Activated CD8-positive, alpha-beta memory T cell treated with anti-CD3 and anti-CD28 coated beads, Interleukin-2, amount 10 ng/mL, durations not matched to agents 7 days and 5 days (primary cell): ENCODE measurements at regions of chr5 and their contacts with region 1.

Region 1: DNA sequence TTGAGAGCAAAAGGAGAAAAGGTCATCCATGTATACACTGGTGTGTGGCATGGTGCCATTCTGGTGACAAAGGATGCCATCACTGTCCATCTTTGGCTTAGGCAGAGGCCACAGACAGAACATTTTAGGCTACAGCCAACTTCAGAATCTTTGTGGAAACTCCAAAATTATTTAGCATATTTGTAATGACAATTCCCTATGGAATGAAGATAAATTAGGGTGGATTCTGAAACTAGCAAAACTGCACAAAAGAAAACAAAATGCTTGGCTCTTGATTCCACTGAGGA is 92.5 kb downstream of the FBXW11 start:
- DNase-seq: no peak
- ATAC-seq: no peak
- H3K4me3 Mint-ChIP-seq: no peak overlapping the region
- H3K27ac Mint-ChIP-seq: no peak overlapping the region
- H3K4me1 Mint-ChIP-seq: peaks cover 35% of the 10 kb centered on the region
- H3K27me3 Mint-ChIP-seq: no peaks in the 10 kb centered on the region

Region 2: DNA sequence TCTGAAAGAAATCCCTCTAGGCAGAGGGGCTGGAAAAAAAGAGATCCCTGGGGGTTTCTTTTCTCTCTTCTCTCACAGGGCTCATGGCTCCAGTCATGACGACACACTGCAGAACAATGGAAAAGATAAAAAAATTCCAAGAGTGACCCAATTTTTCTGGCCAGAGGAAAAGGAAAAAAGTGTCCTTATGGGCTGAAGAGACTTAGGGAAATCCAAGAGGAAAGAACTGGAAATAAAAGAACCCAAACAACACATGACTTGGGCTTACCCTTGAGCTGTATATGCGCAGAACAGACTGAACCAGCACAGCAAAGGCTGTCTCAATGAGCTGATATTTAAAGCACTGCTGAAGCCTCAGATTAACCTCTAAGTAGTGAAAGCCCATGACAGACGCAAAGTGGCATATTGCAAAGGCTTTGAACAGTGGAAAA is 25.9 kb before region 1 on chr5:
- CTCF ChIA-PET with region 1: no interaction called
- DNase-seq: no peak
- ATAC-seq: no peak
- H3K4me3 Mint-ChIP-seq: no peak overlapping the region
- H3K27ac Mint-ChIP-seq: no peak overlapping the region
- H3K4me1 Mint-ChIP-seq: no peaks in the 10 kb centered on the region
- H3K27me3 Mint-ChIP-seq: no peaks in the 10 kb centered on the region

Region 3: GRCh38 chr5:172042181-172042580 is 128.3 kb after region 1 on chr5:
- CTCF ChIA-PET with region 1: interaction called, 21 read pairs
- DNase-seq: no peak
- ATAC-seq: no peak
- H3K4me3 Mint-ChIP-seq: no peak overlapping the region
- H3K27ac Mint-ChIP-seq: no peak overlapping the region
- H3K4me1 Mint-ChIP-seq: peaks cover 2% of the 10 kb centered on the region
- H3K27me3 Mint-ChIP-seq: no peaks in the 10 kb centered on the region

Region 4: DNA sequence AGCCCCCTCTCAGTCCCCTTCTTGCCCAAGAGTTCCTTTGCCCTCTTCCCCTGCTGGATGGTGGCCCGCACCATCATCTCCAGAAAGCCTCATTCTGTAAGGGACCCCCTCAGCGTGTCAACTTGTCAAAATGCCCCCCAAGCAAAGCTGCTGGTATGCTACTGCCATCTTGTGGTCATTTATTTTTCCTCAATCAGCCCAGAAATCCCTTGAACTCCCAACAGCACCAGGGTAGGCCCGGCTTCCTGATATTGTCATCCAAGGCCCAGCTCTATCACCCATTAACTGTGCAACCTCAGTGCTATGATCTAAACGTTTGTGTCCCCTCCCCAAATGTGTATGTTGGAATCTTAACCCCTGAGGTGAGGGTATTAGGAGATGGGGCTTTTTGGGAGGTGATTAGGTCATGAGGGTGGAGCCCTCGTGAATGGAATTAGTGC is 145.8 kb after region 1 on chr5:
- CTCF ChIA-PET with region 1: interaction called, 17 read pairs
- DNase-seq: no peak
- ATAC-seq: no peak
- H3K4me3 Mint-ChIP-seq: no peak overlapping the region
- H3K27ac Mint-ChIP-seq: no peak overlapping the region
- H3K4me1 Mint-ChIP-seq: peaks cover 4% of the 10 kb centered on the region
- H3K27me3 Mint-ChIP-seq: no peaks in the 10 kb centered on the region

Region 5: GRCh38 chr5:172283020-172283861 is 369.3 kb after region 1 on chr5 and contains the start of gene UBTD2:
- CTCF ChIA-PET with region 1: interaction called, 11 read pairs
- DNase-seq: peak; percentile 81
- ATAC-seq: peak; percentile 91
- H3K4me3 Mint-ChIP-seq: peak within 1 kb of the TSS; percentile 83
- H3K27ac Mint-ChIP-seq: peak within 1 kb of the TSS; percentile 57
- H3K4me1 Mint-ChIP-seq: peaks cover 20% of the 10 kb centered on the region
- H3K27me3 Mint-ChIP-seq: peaks cover 14% of the 10 kb centered on the region
- total RNA-seq, gene UBTD2: 7.3 to 8.7 TPM